Astrocyte of the cerebellum (primary cell): ENCODE measurements at regions of chr1 and their contacts with region 1.

Region 1: DNA sequence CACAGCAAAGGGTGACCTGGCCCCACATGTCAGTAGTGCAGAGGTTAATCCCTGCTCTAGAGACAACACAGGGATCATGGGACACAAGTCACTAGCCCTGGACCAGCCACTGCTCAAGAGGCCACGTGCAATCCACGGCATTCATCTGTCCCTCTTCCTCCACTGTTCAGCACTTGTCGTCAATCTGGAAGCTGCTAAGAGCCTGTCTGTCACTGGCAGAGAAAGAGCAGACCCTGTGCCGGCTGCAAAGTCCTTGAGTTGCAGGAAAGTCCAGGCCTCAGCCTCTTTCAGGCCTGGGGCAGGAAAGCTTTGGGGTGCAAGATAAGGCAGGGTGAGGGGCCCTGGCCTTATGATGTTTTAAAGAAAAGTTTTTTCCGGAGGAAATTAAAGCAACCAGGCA is 16.7 kb downstream of the CELA2B start:
- DNase-seq: no peak
- H3K4me3 ChIP-seq: no peak overlapping the region
- CTCF ChIP-seq: no peak

Region 2: GRCh38 chr1:15426492-15427279 is 65.9 kb before region 1 on chr1:
- in situ Hi-C with region 1: no loop called
- DNase-seq: no peak
- H3K4me3 ChIP-seq: no peak overlapping the region
- CTCF ChIP-seq: no peak

Region 3: GRCh38 chr1:15444468-15445389 is 47.9 kb before region 1 on chr1:
- in situ Hi-C with region 1: loop called (anchors 5 kb)
- DNase-seq: no peak
- H3K4me3 ChIP-seq: no peak overlapping the region
- CTCF ChIP-seq: no peak